Aorta (tissue), 5 donors: ENCODE measurements at regions of chr6 and their contacts with region 1.

Region 1: DNA sequence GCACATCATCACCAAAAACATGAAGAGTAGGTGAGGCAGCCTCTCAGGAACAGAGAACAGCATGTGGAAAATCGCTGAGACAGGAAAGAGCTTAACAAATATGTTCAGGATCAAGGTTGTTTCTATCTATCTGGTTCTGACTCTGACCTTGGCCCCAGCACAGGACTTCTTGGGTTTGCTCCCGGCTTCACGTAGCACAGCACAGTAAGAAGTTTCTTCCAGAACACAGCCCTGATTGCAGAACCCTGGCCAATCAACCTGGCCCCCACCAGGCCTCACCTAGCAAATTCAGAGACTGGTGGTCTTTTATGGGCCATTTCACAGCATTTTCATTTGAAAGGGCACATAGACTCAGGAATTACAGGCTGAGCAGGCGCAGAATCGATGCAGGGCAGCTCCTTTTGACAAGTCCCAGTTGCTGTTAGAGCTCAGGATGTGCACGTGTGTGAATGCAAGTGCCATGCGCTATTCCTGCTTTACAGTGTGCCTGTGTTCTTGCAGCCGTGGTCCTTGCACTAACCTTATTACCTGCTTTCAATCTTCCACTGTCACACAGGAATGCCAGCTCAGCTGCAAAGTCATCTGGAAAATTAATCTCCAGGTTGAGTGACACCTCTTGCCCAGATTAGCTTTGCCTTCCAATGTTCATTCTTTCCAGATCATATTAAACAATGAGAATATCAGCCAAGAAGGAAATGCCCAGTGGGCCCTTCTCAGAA is 100.5 kb upstream of the SLC2A12 start:
- DNase-seq: no peak
- ATAC-seq: no peak
- H3K4me3 ChIP-seq: no peak overlapping the region
- H3K27ac ChIP-seq: no peak overlapping the region
- H3K4me1 ChIP-seq: no peaks in the 10 kb centered on the region
- H3K27me3 ChIP-seq: no peaks in the 10 kb centered on the region

Region 2: GRCh38 chr6:134117370-134117807 is 35.5 kb before region 1 on chr6:
- intact Hi-C with region 1: no loop called
- DNase-seq: no peak
- ATAC-seq: no peak
- H3K4me3 ChIP-seq: no peak overlapping the region
- H3K27ac ChIP-seq: no peak overlapping the region
- H3K4me1 ChIP-seq: no peaks in the 10 kb centered on the region
- H3K27me3 ChIP-seq: no peaks in the 10 kb centered on the region

Region 3: GRCh38 chr6:134943522-134944111 is 790.7 kb after region 1 on chr6:
- intact Hi-C with region 1: loop called (anchors 5 kb)
- DNase-seq: no peak
- ATAC-seq: no peak
- H3K4me3 ChIP-seq: no peak overlapping the region
- H3K27ac ChIP-seq: no peak overlapping the region
- H3K4me1 ChIP-seq: no peaks in the 10 kb centered on the region
- H3K27me3 ChIP-seq: no peaks in the 10 kb centered on the region